Activated CD4-positive, alpha-beta memory T cell treated with anti-CD3 and anti-CD28 coated beads for 36 hours (primary cell): ENCODE measurements at regions of chr19 and their contacts with region 1.

Region 1: DNA sequence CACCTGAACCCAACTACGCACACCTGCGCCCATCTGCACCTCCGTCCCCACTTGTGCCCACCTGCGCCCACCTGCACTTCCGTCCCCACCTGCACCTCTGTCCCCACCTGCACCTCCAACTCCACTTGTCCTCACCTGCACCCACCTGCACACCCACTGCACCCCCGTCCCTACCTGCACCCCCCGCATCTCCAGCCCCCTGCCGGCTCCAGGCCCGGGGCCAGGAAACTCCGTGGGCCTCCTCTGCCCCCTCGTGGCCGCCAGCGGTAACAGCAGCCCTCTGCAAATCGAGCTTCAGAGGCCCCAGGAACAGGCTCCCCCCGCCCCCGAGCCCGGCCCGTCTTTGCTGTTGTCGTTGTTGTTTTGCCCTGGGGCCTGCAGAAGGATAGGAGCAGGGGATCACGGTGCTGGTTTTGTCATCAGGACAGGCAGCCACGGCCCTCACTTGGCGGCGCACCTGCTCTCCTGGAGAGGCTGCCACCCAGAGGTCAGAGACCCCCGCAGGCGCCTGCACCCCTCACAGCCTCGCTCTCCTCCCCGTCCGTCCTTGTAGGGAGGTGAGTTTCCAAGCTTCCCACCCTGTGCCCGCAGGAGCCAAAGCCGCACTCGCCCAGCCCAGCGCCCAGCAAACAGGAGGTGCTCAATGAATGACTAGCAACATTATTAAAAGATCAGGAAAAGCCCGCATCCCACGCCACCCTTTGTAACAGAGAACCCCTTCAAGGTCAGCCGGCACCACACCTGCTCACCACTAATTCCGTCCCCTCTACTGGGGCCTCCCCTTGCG is 65.4 kb downstream of the GNG7 start:
- DNase-seq: peak; percentile 82
- H3K4me3 Mint-ChIP-seq: no peak overlapping the region
- H3K27ac Mint-ChIP-seq: no peak overlapping the region
- H3K4me1 Mint-ChIP-seq: peaks cover 5% of the 10 kb centered on the region
- H3K27me3 Mint-ChIP-seq: no peaks in the 10 kb centered on the region

Region 2: DNA sequence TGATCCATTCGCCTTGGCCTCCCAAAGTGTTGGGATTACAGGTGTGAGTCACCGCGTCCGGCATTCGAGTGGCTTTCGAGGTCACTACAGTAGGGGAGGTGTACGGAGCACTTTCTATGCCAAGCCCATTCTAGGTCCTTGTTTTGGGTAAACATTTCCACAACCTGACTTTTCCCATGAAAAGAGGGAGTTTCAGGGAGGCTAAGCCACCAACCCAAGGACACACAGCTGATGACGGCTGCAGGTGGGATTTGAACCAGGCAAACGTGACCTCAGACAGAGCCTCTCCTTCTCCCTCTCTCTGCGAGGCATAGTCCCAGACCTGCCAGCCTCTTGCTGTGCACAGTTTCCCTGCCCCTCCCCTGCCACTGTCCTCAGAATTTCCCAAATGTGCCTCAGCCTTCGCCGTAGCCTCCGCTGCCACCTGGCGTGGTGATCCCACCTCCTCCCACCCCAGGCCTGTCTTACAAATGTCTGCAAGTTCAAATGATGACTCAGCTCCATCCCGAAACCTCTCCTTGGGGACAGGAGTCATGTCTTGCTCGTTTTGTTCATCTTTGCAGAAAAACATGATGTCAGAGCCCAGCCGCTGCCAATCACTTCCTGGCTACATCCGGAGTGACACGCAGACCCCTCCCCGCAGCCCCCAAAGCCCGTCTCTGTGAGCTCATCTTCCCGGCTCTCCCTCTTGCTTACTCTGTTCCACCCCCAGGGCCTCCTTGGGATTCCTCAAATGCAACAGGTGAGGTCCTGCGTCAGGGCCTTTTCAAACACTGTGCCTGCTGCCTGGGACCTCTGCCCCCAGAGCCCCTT is 167.8 kb before region 1 on chr19:
- CTCF ChIA-PET with region 1: interaction called, 14 read pairs
- POLR2A ChIA-PET with region 1: no interaction called
- intact Hi-C with region 1: no loop called
- DNase-seq: peak; percentile 76
- H3K4me3 Mint-ChIP-seq: peak overlapping the region; percentile 26
- H3K27ac Mint-ChIP-seq: peak overlapping the region; percentile 57
- H3K4me1 Mint-ChIP-seq: peaks cover 11% of the 10 kb centered on the region
- H3K27me3 Mint-ChIP-seq: peaks cover 1% of the 10 kb centered on the region

Region 3: DNA sequence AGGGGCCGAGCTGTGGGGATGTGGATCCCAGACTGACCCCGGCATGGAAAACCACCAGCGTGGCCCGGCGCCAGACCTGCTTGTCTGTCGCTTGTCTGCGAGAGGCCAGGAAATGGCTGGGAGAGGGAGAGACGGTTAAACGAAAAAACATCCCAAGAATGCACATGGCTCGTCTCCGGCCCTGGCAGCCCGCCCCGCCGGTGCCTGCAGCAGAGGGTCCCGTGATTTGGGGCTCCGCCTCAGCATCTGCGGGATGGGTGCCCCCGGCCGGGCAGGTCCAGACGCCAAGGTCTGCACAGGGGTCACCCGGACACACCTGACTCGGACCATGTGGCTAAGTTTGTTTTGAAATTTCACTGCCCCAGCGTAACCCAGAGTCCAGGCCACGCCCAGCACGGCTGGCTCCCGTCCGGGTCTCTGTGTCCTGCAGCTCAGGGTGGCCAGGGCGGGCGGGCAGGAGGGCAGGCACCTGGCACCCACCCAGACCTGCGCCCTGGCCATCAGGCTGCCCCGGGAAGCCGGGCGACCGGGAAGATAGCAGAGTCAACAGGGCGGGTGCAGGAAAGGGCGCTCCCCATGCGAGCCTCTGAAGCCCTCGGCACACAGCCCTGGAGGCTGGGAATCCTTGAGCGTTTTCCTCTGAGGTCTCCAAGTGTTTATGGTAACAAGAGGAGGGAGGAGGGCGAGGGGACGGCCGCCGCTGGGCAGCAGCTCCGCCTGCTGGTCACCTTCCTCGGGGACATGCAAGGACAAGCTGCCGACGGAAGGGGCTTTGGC is 58.0 kb before region 1 on chr19:
- CTCF ChIA-PET with region 1: interaction called, 11 read pairs
- POLR2A ChIA-PET with region 1: no interaction called
- intact Hi-C with region 1: no loop called
- DNase-seq: peak; percentile 80
- H3K4me3 Mint-ChIP-seq: peak overlapping the region; percentile 12
- H3K27ac Mint-ChIP-seq: no peak overlapping the region
- H3K4me1 Mint-ChIP-seq: no peaks in the 10 kb centered on the region
- H3K27me3 Mint-ChIP-seq: peaks cover 13% of the 10 kb centered on the region

Region 4: GRCh38 chr19:2840794-2841790 is 204.0 kb after region 1 on chr19 and contains the start of gene ZNF555:
- CTCF ChIA-PET with region 1: no interaction called
- POLR2A ChIA-PET with region 1: no interaction called
- intact Hi-C with region 1: no loop called
- DNase-seq: peak; percentile 99
- H3K4me3 Mint-ChIP-seq: peak within 1 kb of the TSS; percentile 83
- H3K27ac Mint-ChIP-seq: peak within 1 kb of the TSS; percentile 77
- H3K4me1 Mint-ChIP-seq: peaks cover 9% of the 10 kb centered on the region
- H3K27me3 Mint-ChIP-seq: no peaks in the 10 kb centered on the region
- total RNA-seq, gene ZNF555: 3.6 to 3.8 TPM

Region 5: DNA sequence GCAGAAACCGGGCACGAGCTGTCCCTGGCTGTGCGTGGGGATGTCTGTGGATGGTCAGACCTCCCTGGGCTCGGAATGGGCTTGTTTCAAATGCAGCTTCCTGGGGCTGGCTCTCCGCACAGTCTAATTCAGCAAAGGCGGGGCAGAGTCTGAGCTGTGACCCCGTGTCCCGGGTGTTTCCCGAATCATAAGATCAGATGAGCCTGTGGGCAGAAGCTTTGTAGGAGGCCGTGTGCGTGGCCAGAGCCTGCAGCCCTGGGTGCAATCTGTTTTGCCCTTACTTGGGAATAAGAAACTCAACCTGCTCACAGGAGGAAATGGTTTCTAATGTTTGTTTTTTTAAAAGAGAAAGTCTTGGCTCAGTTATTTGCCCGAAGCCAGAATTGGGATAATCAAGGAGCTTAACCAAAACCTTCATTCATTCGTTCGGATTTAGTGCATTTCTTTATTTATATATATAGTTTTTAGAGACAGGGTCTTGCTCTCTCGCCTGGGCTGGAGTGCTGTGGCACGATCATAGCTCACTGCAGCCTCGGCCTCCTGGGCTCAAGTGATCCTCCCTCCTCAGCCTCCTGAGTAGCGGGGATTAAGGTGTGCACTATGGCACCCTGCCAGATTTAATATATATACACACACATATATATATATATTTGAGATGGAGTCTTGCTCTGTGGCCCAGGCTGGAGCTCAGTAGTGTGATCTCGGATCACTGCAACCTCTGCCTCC is 443.4 kb after region 1 on chr19:
- CTCF ChIA-PET with region 1: no interaction called
- POLR2A ChIA-PET with region 1: no interaction called
- intact Hi-C with region 1: no loop called
- DNase-seq: no peak
- H3K4me3 Mint-ChIP-seq: no peak overlapping the region
- H3K27ac Mint-ChIP-seq: no peak overlapping the region
- H3K4me1 Mint-ChIP-seq: peaks cover under 1% of the 10 kb centered on the region
- H3K27me3 Mint-ChIP-seq: no peaks in the 10 kb centered on the region